ENCODE measurements at regions of chr6 and their contacts with region 1.

Region 1: DNA sequence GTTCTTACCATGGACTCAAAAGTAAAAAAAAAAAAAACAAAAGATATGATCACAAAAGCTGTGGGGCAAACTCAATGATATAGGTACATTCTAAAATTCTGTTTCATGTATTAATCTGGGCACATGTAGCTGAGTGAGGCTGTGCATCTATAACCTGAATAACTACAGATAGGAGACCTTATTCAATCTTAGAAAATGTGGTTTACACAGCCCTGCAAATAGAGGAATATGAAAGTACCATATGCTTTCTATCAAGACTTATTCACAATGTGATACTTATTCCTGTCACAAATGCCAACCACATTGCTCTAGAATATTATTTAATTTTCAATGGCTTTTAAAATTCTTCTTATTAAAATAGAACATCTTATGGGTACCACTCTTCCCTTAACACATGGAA is 3.1 kb upstream of the SPACA1 start:
- DNase-seq: no peak
- ATAC-seq: no peak
- H3K4me3 ChIP-seq: no peak overlapping the region
- H3K4me3 Mint-ChIP-seq: no peak overlapping the region
- H3K27ac ChIP-seq: no peak overlapping the region
- H3K27ac Mint-ChIP-seq: no peak overlapping the region
- H3K4me1 ChIP-seq: no peaks in the 10 kb centered on the region
- H3K4me1 Mint-ChIP-seq: no peaks in the 10 kb centered on the region
- H3K27me3 ChIP-seq: no peaks in the 10 kb centered on the region
- H3K27me3 Mint-ChIP-seq: peaks cover 14% of the 10 kb centered on the region
- CTCF ChIP-seq: no peak

Region 2: DNA sequence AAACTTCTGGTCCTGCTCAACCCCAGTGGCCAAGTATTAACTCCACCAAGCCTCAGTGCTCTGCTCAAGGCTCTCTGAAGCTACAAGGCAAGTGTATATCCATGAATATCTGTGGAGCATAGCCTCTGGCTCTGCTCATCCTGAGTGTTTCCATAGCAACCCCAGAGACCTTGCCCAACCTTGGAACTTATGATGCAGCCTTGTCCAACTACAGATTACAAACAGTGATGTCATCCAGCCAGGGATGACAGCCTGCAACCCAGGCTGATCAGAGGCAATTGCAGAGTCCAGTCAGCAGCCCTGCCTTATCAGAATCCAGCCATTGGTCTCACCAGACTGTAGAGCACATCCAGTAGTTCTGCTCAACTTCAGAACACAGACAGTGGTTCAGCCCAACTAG is 62.4 kb before region 1 on chr6:
- CTCF ChIA-PET with region 1: no interaction called
- POLR2A ChIA-PET with region 1: no interaction called
- intact Hi-C with region 1: loop called in 1 of 2 experiments (anchors 2 kb)
- DNase-seq: no peak
- ATAC-seq: no peak
- H3K4me3 ChIP-seq: no peak overlapping the region
- H3K4me3 Mint-ChIP-seq: no peak overlapping the region
- H3K27ac ChIP-seq: no peak overlapping the region
- H3K27ac Mint-ChIP-seq: no peak overlapping the region
- H3K4me1 ChIP-seq: no peaks in the 10 kb centered on the region
- H3K4me1 Mint-ChIP-seq: no peaks in the 10 kb centered on the region
- H3K27me3 ChIP-seq: no peaks in the 10 kb centered on the region
- H3K27me3 Mint-ChIP-seq: peaks cover 16% of the 10 kb centered on the region
- CTCF ChIP-seq: no peak

Measured in CD8-positive, alpha-beta T cell (primary cell).